ENCODE measurements at regions of chr18 and their contacts with region 1.

Region 1: DNA sequence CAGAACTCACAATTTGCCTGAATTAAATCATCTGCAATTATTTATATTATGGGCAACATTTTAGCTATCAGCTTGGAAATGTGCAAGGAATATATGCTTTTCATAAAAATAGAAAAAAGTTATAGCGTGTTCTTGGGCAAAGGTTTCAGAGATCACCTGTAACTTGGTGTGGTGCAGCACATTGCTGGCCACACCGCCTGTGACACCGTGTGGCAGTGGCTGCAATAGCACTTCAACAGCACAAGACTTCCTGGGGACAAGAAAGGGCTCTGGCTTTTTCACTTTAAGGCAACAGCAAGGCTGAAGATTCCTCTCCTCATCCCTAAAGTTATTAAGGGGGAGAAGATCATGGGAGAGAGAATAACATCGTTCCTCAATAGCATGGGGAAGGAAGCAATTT is 14.8 kb upstream of the SERPINB3 start:
- DNase-seq: peak; percentile 50
- H3K4me3 Mint-ChIP-seq: no peak overlapping the region
- H3K27ac Mint-ChIP-seq: no peak overlapping the region
- H3K4me1 Mint-ChIP-seq: peaks cover 13% of the 10 kb centered on the region
- H3K27me3 Mint-ChIP-seq: no peaks in the 10 kb centered on the region
- CTCF ChIP-seq: peak; percentile 37

Region 2: GRCh38 chr18:63848159-63848558 is 171.6 kb after region 1 on chr18:
- CTCF ChIA-PET with region 1: interaction called, 4 read pairs
- POLR2A ChIA-PET with region 1: no interaction called
- intact Hi-C with region 1: loop called (anchors 5 kb)
- DNase-seq: peak; percentile 73
- H3K4me3 Mint-ChIP-seq: no peak overlapping the region
- H3K27ac Mint-ChIP-seq: no peak overlapping the region
- H3K4me1 Mint-ChIP-seq: no peaks in the 10 kb centered on the region
- H3K27me3 Mint-ChIP-seq: no peaks in the 10 kb centered on the region
- CTCF ChIP-seq: peak; percentile 64